Pancreas (tissue), 10 donors: ENCODE measurements at regions of chr4 and their contacts with region 1.

Region 1: GRCh38 chr4:41214136-41214824 is at the start of gene APBB2:
- DNase-seq: peak; percentile 95 to 98 (median 96)
- ATAC-seq: peak; percentile 85 to 91 (median 90)
- H3K4me3 ChIP-seq: peak within 1 kb of the TSS; percentile 66 to 93 (median 89)
- H3K27ac ChIP-seq: peak within 1 kb of the TSS; percentile 59 to 88 (median 78)
- H3K4me1 ChIP-seq: peaks cover 0 to 23% (median 7%) of the 10 kb centered on the region in 3 donors
- H3K27me3 ChIP-seq: no peaks in the 10 kb centered on the region
- CTCF ChIP-seq: peak; percentile 71 to 89 (median 76)
- total RNA-seq, gene APBB2: 11.0 to 21.6 (median 12.6) TPM

Region 2: DNA sequence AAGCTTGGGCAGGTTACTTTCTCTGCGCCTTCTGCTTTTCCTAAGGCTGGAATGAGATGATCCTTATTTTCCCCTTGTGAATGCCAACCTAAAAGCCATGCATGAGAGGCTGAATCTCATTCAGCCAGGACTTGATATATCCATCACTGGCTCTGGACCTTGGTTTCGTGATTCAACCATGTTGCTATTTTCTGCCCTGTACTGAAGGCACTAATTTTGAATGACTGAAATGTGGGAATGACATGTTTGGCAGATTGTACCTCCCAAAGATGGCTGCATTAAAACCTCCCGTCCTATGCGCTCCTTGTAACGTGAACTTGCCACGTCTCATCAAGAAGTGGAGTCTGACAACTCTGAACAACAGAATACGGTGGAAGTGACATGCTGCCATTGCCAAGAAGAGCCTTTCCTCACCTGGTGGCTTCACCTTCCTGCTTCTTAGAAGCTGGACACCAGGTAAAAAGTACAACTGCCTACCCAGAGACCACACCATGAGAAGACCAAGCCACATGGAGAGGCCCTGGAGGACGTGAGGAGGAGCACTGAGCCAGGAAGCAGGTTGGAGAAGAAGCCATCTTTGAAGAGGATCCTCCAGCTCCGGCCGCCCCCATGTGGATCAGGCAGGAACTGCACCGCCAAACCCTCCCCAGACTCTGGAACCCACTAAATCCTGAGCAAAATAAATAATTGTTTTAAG is 290.0 kb before region 1 on chr4:
- intact Hi-C with region 1: loop called in 2 of 3 experiments (anchors 5 to 10 kb)
- DNase-seq: peak in 5 of 6 donors; percentile 39 to 87 (median 62)
- ATAC-seq: peak; percentile 55 to 77 (median 72)
- H3K4me3 ChIP-seq: no peak overlapping the region
- H3K27ac ChIP-seq: peak overlapping the region; percentile 3 to 71 (median 52)
- H3K4me1 ChIP-seq: peaks cover 0 to 10% (median 6%) of the 10 kb centered on the region in 3 donors
- H3K27me3 ChIP-seq: no peaks in the 10 kb centered on the region
- CTCF ChIP-seq: peak; percentile 63 to 75 (median 68)

Region 3: GRCh38 chr4:40976343-40976742 is 237.9 kb before region 1 on chr4:
- intact Hi-C with region 1: loop called in 1 of 3 experiments (anchors 5 kb)
- DNase-seq: peak in 3 of 6 donors; percentile 32 to 53 (median 40)
- ATAC-seq: peak; percentile 64 to 88 (median 86)
- H3K4me3 ChIP-seq: no peak overlapping the region
- H3K27ac ChIP-seq: no peak overlapping the region
- H3K4me1 ChIP-seq: no peaks in the 10 kb centered on the region
- H3K27me3 ChIP-seq: no peaks in the 10 kb centered on the region
- CTCF ChIP-seq: peak; percentile 34 to 72 (median 50)

Region 4: GRCh38 chr4:41751449-41752061 is 537.3 kb after region 1 on chr4:
- intact Hi-C with region 1: no loop called
- DNase-seq: peak in 1 of 6 donors; percentile 46
- ATAC-seq: no peak
- H3K4me3 ChIP-seq: no peak overlapping the region
- H3K27ac ChIP-seq: no peak overlapping the region
- H3K4me1 ChIP-seq: no peaks in the 10 kb centered on the region
- H3K27me3 ChIP-seq: peaks cover 0 to 55% (median 13%) of the 10 kb centered on the region in 4 donors
- CTCF ChIP-seq: no peak